Activated T-helper 1 cell treated with anti-CD3 and anti-CD28 coated beads, Interleukin-12 subunit alpha, Interleukin-12 subunit beta, Interleukin-2, Interleukin-4 antibody, amounts not matched to agents 30 ng/mL and 10 ng/mL and 1 ng/mL, durations not matched to agents 14 hours and 24 hours and 36 hours (primary cell): ENCODE measurements at regions of chr22 and their contacts with region 1.

Region 1: DNA sequence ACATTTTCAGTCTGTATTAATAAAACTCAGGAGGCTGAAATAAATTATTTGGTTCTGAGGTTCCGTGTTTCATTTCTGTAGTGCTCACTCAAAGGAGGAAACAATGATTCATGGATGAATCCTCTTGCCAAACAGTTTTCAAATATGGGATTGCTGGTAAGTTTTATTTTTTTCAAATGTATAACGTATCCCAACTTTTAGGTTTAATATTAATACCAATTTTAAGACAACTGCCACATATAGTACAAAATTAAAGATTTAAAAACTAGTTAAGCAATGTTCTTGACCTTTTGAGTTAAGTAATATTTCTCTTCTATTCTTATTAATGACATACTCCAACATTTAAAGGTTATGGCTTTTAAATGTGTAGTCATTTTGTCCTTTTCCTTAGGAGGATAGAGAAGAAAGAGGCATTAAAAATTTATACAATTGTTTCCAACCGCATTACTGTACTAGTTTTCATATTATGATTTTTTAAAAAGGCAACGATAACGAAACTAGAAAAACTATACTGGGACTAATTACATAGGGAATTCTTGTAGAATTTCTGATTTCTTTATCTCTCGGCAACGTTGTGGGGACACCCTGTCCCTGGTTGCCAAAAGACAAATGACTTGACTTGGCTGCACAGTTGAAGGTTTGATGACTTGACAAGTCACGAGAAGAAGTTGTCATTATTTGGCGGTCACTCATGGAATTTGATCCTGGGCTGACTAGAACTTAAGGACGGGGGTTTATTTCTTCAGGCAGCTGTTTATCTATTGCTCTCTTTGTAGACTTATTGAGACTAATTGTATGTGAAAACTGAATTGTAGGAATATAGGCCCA is 69.1 kb upstream of the ADSL start:
- DNase-seq: no peak
- H3K4me3 Mint-ChIP-seq: no peak overlapping the region
- H3K27ac Mint-ChIP-seq: peak overlapping the region; percentile 29
- H3K4me1 Mint-ChIP-seq: peaks cover 31% of the 10 kb centered on the region
- H3K27me3 Mint-ChIP-seq: no peaks in the 10 kb centered on the region

Region 2: DNA sequence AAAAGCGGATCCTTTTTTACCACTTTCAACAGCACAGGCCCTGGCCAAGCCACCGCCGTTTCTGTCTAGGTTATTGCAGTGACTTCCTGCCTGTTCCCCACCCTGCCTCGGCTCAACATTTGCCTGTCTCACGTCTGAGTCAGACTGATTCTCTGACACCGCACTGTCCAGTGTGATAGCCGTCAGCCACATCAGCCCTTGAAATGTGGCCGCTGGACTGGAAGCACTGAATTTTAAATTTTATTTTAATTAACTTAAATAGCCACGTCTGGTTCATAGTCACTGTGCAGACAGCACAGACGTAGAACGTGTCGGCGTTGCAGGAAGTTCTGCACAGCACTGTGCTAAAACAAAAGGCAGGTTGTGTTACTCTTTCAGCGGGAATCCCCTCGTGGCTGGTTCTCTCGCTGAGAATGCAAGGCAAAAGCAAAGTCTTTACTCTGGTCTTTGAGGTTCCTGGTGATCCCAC is 12.8 kb after region 1 on chr22:
- intact Hi-C with region 1: loop called (anchors 1 kb)
- DNase-seq: peak; percentile 61
- H3K4me3 Mint-ChIP-seq: peak overlapping the region; percentile 65
- H3K27ac Mint-ChIP-seq: peak overlapping the region; percentile 95
- H3K4me1 Mint-ChIP-seq: peaks cover 55% of the 10 kb centered on the region
- H3K27me3 Mint-ChIP-seq: no peaks in the 10 kb centered on the region